GM13977 (cell line): ENCODE measurements at regions of chr1 and their contacts with region 1.

Region 1: GRCh38 chr1:242005866-242006565 is 7.1 kb upstream of the MAP1LC3C start:
- DNase-seq: no peak
- CTCF ChIP-seq: no peak

Region 2: GRCh38 chr1:241895013-241895412 is 111.0 kb before region 1 on chr1:
- in situ Hi-C with region 1: loop called (anchors 10 kb)
- DNase-seq: no peak
- CTCF ChIP-seq: no peak

Region 3: DNA sequence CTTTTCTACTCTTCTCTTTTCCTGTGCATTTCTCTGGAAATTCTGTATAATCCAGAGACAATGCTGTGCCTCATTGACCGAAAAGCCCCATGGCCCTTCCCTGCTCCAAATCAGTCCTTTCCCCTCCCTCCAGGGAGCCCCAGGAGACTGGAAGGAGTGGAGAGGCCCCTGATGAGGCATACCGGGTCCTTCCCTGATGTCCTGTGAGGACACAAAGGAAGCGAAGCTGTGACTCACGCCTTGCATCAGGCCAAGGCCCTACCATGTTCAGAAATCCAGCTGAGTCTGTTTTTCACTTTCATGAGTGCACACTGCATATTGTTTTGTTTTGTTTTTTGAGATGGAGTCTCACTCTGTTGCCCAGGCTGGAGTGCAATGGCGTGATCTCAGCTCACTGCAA is 87.1 kb before region 1 on chr1:
- in situ Hi-C with region 1: no loop called
- DNase-seq: no peak
- CTCF ChIP-seq: no peak

Region 4: GRCh38 chr1:242162140-242162539 is 156.1 kb after region 1 on chr1:
- in situ Hi-C with region 1: no loop called
- DNase-seq: no peak
- CTCF ChIP-seq: no peak

Region 5: DNA sequence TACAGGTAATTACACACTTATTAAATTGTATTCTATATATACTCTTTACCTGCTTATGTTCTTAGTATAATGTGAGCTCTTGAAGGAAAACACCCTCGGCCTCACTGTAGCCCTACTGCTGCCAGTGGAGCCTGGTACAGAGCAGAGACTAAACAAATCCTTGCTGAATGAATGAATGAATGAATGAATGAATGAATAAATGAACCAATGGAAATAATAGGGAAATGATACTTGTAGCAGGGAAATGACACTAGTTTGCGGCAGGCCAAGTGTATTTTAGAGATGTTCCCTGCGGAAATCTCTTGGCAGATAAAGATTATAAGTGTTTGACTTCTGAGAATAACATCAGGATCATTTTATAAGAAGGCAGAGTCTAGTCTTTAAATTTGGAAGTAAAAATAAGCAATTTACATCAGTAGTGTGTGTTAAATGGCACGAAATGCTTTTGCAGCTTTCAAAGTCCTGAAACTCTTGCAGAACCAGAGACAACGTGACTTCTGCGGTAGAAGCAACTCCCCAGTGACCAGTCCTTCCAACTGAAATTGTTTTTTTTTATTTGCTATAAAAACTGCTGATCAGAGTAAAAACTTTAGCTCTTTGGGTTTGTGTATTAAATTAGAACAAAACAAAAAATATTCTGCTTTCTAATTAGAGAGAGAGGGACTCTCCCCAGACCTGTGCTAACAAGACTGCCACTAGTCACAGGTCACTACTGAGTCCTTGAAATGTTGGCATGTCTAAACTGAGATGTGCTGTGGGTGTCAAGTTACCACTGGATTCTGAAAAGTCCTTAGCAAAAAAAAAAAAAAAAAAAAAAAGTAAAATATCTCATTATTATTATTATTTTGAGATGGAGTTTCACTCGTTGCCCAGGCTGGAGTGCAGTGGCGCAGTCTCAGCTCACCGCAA is 192.1 kb after region 1 on chr1:
- in situ Hi-C with region 1: no loop called
- DNase-seq: no peak
- CTCF ChIP-seq: no peak

Region 6: DNA sequence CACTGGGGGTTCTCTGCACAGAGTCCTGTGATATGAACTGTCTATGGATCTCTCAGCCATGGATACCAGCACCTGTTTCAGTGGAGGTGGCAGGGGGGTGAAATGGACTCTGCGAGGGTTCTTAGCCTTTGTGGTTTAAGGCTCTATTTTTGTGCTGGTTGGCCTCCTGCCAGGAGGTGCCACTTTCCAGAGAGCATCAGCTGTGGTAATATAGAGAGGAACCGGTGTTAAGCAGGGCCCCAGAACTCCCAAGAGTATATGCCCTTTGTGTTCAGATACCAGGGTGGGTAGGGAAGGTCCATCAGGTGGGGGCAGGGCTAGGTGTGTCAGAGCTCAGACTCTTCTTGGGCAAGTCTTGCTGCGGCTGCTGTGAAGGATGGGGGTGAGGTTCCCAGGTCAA is 848.5 kb after region 1 on chr1:
- in situ Hi-C with region 1: no loop called
- DNase-seq: no peak
- CTCF ChIP-seq: no peak